Activated naive CD4-positive, alpha-beta T cell treated with anti-CD3 and anti-CD28 coated beads, Interleukin-2, amount 10 ng/mL, durations not matched to agents 7 days and 5 days (primary cell): ENCODE measurements at regions of chr20 and their contacts with region 1.

Region 1: DNA sequence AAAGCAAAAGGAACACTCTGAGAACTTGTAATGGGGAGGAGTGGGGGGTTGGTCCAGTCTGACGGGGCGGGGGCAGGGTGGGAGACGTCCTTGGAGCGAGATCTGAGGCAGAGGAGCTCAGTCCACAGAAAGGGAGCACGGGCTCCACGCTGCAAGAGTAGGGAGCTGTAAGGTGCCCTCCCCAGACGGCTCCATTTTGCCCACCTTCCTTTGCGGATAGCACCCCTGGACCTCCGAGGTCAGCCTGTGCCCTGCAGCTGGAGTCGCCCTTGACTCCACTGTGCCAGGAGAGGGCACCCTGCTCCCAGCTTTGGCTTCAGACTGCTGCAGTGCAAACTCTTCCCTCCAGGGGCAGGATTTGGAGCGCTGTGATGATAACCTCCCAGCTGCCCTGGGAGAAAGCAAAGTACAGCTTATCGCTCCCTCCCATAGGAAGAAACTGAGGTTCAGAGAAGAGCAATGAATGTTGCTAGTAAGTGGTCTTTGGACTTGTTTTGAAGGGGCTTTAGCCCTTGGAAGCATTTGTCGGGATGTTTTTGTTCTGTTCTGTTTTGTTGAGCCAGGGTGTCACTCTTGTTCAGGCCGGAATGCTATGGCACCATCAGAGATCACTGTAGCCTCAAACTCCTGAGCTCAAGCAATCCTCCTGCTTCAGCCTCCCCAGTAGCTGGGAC is 9.5 kb upstream of the AHCY start:
- DNase-seq: peak; percentile 92
- H3K4me3 Mint-ChIP-seq: no peak overlapping the region
- H3K27ac Mint-ChIP-seq: no peak overlapping the region
- H3K4me1 Mint-ChIP-seq: peaks cover 13% of the 10 kb centered on the region
- H3K27me3 Mint-ChIP-seq: peaks cover 52% of the 10 kb centered on the region

Region 2: DNA sequence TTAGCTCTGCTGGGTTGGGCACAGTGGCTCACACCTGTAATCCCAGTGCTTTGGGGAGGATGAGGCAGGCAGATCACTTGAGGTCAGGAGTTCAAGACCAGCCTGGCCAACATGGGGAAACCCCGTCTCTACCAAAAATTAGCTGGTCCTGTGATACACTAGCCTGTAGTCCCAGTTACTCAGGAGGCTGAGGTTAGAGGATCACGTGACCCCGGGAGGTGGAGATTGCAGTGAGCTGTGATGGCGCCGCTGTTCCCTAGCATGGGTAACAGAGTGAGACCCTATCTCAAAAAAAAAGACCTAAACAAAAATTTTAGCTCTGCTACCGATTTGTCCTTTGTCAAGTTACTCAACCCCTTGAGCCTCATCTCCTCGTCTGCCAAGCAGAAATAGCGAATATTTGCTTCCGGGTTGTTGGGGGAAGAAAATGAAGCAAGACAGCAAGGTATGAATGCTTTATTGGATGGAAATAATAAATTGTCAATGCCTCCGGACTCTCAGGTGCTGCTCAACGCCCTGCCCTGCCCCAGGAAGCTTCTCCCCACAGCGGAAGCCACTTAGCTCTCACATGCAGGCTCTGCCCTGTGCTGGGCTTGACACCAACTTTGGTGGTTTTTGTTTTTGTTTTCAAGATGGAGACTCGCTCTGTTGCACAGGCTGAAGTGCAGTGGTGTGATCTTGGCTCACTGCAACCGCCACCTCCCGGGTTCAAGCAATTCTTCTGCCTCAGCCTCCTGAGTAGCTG is 25.5 kb after region 1 on chr20:
- CTCF ChIA-PET with region 1: interaction called, 10 read pairs
- DNase-seq: no peak
- H3K4me3 Mint-ChIP-seq: no peak overlapping the region
- H3K27ac Mint-ChIP-seq: peak overlapping the region; percentile 42
- H3K4me1 Mint-ChIP-seq: no peaks in the 10 kb centered on the region
- H3K27me3 Mint-ChIP-seq: peaks cover 4% of the 10 kb centered on the region

Region 3: GRCh38 chr20:34473262-34473883 is 160.7 kb after region 1 on chr20:
- CTCF ChIA-PET with region 1: interaction called, 41 read pairs
- DNase-seq: peak; percentile 63
- H3K4me3 Mint-ChIP-seq: no peak overlapping the region
- H3K27ac Mint-ChIP-seq: no peak overlapping the region
- H3K4me1 Mint-ChIP-seq: peaks cover 6% of the 10 kb centered on the region
- H3K27me3 Mint-ChIP-seq: no peaks in the 10 kb centered on the region

Region 4: GRCh38 chr20:34538671-34539123 is 226.0 kb after region 1 on chr20:
- CTCF ChIA-PET with region 1: interaction called, 25 read pairs
- DNase-seq: peak; percentile 72
- H3K4me3 Mint-ChIP-seq: no peak overlapping the region
- H3K27ac Mint-ChIP-seq: peak overlapping the region; percentile 7
- H3K4me1 Mint-ChIP-seq: peaks cover 11% of the 10 kb centered on the region
- H3K27me3 Mint-ChIP-seq: no peaks in the 10 kb centered on the region

Region 5: GRCh38 chr20:34704177-34705007 is 391.7 kb after region 1 on chr20 and contains the start of gene TP53INP2:
- CTCF ChIA-PET with region 1: interaction called, 53 read pairs
- DNase-seq: peak; percentile 95
- H3K4me3 Mint-ChIP-seq: peak within 1 kb of the TSS; percentile 97
- H3K27ac Mint-ChIP-seq: peak within 1 kb of the TSS; percentile 90
- H3K4me1 Mint-ChIP-seq: peaks cover 46% of the 10 kb centered on the region
- H3K27me3 Mint-ChIP-seq: peaks cover 47% of the 10 kb centered on the region

Region 6: DNA sequence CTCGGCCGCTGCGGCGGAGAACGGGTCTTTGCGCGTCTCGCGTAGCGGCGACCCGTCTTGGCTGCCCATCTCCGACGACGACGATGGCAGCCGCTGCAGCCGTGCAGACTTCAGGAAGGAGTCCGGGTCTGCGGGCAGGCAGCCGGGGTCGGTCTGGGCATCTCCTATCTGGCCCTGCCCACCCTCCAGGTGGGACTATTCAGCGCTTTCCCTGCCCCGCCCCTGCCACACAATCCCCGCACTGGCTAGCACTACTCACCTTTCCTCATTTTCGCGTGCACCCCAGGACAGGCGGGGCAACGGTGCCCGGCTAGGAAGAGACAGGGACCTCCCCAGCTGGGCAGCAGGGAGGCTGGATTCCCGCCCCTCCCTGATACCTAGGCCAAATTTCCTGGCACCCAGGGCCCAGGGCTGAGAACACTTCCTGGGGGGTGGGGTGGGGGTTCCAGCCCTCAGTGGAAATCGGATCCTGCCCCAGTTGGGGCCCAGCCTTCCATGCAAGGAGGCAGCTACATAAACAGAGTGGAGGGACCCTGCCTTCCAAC is 550.8 kb after region 1 on chr20:
- CTCF ChIA-PET with region 1: no interaction called
- DNase-seq: no peak
- H3K4me3 Mint-ChIP-seq: no peak overlapping the region
- H3K27ac Mint-ChIP-seq: no peak overlapping the region
- H3K4me1 Mint-ChIP-seq: peaks cover 13% of the 10 kb centered on the region
- H3K27me3 Mint-ChIP-seq: no peaks in the 10 kb centered on the region